BJ (cell line): ENCODE measurements at regions of chr12 and their contacts with region 1.

Region 1: DNA sequence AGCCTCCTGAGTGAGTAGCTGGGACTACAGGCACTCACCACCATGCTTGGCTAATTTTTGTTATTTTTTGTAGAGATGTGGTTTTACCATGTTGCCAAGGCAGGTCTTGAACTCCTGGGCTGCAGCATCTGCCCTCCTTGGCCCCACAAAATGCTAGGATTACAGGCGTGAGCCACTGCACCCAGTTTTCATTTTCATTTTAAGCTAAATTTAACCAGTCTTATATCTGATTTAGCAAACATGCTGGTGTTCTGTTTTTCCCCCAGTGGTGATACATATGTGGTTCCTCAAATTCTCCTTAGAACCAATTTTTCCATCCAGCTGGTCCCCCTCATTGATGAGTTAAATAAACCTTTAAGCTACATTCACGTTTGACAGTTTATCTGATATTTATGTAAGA is 43.8 kb upstream of the BICD1 start:
- DNase-seq: no peak
- H3K4me3 ChIP-seq: no peak overlapping the region
- H3K27me3 ChIP-seq: no peaks in the 10 kb centered on the region
- CTCF ChIP-seq: no peak

Region 2: GRCh38 chr12:31651893-31652521 is 410.9 kb before region 1 on chr12:
- CTCF ChIA-PET with region 1: interaction called, 16 read pairs
- POLR2A ChIA-PET with region 1: no interaction called
- DNase-seq: no peak
- H3K4me3 ChIP-seq: no peak overlapping the region
- H3K27me3 ChIP-seq: no peaks in the 10 kb centered on the region
- CTCF ChIP-seq: no peak

Region 3: DNA sequence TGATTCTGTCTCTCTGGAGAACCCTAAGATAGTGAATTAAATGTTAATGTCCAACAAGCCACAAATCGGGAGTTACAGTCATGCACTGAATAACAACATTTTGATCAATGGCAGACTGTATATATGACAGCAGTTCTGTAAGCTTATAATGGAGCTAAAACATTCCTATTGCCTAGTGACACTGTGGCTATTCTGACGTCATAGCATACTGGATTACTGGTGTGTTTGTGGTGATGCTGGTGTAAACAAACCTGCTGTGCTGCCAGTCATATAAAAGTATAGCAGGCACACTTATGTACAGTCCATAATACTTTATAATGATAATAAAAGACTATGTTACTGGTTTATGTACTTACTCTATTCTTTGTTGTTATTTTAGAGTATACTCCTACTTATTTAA is 12.9 kb before region 1 on chr12:
- CTCF ChIA-PET with region 1: interaction called, 11 read pairs
- POLR2A ChIA-PET with region 1: no interaction called
- DNase-seq: no peak
- H3K4me3 ChIP-seq: no peak overlapping the region
- H3K27me3 ChIP-seq: no peaks in the 10 kb centered on the region
- CTCF ChIP-seq: no peak

Region 4: DNA sequence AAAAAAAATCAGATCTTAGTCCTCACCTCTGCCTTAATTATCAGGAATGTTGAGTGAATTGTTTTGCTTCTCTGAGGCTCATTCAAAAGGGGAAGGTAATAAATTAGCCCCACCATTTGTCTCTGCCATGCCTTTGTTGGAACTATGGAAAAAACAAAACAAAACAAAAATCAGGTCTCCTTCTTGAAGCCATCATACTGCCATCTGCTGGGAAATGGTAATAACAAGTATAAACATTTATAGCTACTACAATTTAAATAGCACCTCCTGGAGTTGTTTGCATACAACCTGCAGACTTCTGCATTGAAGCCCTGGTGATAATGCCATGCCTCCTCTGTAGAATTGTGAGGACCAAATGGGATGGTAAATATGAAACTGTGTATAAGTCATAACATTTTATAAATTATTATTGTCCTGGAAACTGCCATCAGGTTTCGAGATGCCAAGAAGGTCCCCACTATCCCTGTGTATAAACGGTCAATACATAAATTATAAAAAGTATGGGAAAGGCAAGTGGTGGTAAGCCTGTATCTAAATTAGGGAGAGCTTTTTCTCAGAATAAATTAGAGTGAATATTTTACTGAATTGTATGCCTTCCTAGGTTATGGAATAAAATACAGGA is 249.3 kb after region 1 on chr12:
- CTCF ChIA-PET with region 1: interaction called, 45 read pairs
- POLR2A ChIA-PET with region 1: no interaction called
- DNase-seq: peak; percentile 30
- H3K4me3 ChIP-seq: no peak overlapping the region
- H3K27me3 ChIP-seq: no peaks in the 10 kb centered on the region
- CTCF ChIP-seq: peak; percentile 54